Sciatic nerve (tissue), 2 donors: ENCODE measurements at regions of chr2 and their contacts with region 1.

Region 1: GRCh38 chr2:118882709-118883210 is 35.3 kb upstream of the EN1 start:
- DNase-seq: peak; percentile 73
- ATAC-seq: peak; percentile 81

Region 2: DNA sequence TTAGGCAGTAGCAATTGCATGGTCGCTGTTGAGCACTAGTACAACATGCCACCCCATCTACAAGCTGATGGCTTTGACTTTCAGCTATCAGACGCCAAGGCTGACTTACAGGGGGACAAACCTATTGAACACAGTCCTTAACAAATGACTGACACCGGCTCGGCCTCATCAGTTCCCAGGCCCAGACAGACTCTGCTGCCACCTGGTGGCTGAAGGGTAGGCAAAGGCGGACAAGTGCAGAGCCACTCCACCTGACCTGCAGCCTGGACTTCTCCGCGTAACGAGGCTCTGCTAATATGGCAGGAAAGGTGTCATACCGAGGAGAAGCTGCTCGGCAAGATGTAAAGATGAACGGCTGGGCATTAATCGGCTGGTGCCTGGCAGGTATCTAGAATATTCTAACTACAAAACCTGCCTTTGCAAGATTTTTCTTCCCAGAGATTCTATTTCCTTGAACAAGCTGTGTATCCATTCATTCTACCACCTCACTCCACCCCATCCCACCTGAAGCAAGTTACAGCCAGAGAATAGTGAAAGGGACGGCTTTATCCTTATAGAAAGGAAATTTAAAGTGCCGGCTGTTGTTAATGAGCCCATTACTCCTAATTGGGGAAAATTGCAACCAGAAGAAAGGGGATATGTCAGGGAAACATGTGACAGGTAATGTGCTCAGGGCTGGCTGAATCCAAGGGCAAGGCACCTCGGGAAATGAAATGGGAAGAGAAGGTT is 408.3 kb after region 1 on chr2:
- intact Hi-C with region 1: loop called (anchors 10 kb)
- DNase-seq: peak; percentile 89
- ATAC-seq: no peak

Region 3: GRCh38 chr2:119476301-119477021 is 593.7 kb after region 1 on chr2:
- intact Hi-C with region 1: loop called (anchors 10 kb)
- DNase-seq: no peak
- ATAC-seq: peak; percentile 76